Posterior cingulate gyrus (tissue), 11 donors: ENCODE measurements at regions of chr9 and their contacts with region 1.

Region 1: GRCh38 chr9:110579034-110579861 is at the start of gene SVEP1:
- DNase-seq: peak; percentile 40 to 95 (median 59)

Region 2: DNA sequence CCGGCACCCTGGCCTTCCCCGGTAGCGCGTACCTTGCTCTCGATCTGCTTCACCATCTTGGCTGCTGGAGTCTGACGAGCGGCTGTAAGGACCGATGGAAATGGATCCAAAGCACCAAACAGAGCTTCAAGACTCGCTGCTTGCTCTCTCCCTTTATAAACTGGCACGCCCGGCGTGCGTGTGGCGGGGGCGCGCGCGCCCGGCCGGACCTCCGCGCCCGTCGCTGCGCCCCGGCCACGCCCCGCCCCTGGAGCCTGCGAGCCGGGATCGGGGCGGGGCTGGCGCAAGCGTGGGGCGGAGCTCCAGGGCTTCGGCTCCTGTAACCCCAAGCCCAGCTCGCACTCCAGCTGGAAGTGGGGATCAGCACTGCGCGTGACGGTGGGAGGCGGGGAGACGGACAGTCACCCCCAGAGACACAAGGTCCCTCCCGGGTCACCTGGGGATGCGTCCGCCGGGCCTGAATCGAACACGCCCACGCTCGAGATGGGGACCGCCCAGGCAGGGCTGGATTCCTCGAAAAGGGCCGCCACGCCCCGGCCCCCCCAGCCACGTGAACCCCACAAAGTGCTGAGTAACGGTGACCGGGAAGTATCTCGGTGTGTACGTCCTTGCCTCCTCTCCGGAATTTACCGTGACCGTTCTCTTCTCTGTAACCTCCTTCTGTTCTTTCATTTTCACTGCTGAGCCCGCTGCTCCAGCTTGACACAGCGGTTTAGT is 322.7 kb before region 1 on chr9 and contains the start of gene TXN:
- intact Hi-C with region 1: loop called (anchors 5 kb)
- DNase-seq: peak; percentile 73 to 98 (median 82)

Region 3: DNA sequence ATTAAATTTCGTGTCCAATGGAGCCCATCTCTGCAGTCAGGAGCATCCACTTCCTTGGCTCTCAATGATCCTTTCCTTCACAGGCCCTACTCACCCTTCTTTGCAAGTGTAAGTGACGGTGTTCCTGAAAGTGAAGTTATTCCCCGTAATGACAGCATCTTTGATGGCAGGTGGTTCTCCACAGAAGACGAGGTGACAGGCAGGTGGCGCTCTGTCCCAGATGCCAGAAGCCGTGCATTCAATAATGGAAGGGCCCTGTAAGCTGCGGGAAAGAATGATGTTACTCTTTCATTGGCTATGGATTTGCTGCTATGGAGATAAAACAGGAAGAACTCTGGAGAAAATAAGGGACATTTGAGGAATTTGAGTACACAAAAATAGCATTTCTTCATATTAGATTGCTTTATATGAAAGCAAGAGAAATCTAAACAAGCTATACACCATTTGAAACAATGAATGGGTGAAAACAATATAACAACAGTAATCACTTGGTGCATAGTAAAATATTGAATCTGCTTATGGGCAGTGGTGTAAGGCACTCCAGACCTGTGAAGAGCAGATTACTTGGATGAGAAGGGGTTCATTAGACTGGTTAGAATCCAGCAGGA is 151.6 kb before region 1 on chr9:
- intact Hi-C with region 1: loop called (anchors 5 kb)
- DNase-seq: peak in 8 of 10 donors; percentile 12 to 91 (median 59)

Region 4: GRCh38 chr9:110440172-110440571 is 139.1 kb before region 1 on chr9:
- intact Hi-C with region 1: no loop called
- DNase-seq: peak in 3 of 10 donors; percentile 28 to 88 (median 32)